A549 (cell line): ENCODE measurements at regions of chr20 and their contacts with region 1.

Region 1: GRCh38 chr20:21719592-21720214 is 14.2 kb downstream of the PAX1 start:
- DNase-seq: peak; percentile 65 to 78
- ATAC-seq: peak in 1 of 2 experiments; percentile 76; a peak in 3 of 6 replicates
- H3K4me3 ChIP-seq: no peak overlapping the region
- H3K27ac ChIP-seq: no peak overlapping the region
- H3K4me1 ChIP-seq: no peaks in the 10 kb centered on the region
- CTCF ChIP-seq: peak; percentile 89
- EP300 ChIP-seq: no peak
- POLR2A ChIP-seq: no peak
- RAD21 ChIP-seq: peak; percentile 41 to 54

Region 2: DNA sequence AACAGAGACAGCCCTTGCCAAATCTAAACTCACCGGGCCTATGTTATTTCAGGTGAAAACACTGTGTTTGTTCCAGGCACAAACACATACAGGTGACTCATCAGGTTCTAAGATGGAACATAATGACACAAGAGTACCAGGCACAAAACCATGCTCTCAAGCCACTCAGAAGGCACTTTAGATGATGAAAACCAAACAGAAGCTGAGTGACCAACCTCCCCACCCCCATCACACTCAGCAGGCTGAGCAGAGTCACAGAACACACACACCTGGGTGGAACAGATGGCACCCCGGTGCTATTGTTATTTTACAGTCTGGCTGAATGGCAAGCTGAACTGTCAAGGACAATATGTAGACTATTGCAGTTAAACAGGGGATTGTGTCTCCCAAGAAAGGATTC is 185.2 kb before region 1 on chr20:
- CTCF ChIA-PET with region 1: no interaction called
- POLR2A ChIA-PET with region 1: no interaction called
- DNase-seq: no peak
- ATAC-seq: no peak
- H3K4me3 ChIP-seq: no peak overlapping the region
- H3K27ac ChIP-seq: no peak overlapping the region
- H3K4me1 ChIP-seq: no peaks in the 10 kb centered on the region
- CTCF ChIP-seq: no peak
- EP300 ChIP-seq: no peak
- POLR2A ChIP-seq: no peak
- RAD21 ChIP-seq: no peak

Region 3: DNA sequence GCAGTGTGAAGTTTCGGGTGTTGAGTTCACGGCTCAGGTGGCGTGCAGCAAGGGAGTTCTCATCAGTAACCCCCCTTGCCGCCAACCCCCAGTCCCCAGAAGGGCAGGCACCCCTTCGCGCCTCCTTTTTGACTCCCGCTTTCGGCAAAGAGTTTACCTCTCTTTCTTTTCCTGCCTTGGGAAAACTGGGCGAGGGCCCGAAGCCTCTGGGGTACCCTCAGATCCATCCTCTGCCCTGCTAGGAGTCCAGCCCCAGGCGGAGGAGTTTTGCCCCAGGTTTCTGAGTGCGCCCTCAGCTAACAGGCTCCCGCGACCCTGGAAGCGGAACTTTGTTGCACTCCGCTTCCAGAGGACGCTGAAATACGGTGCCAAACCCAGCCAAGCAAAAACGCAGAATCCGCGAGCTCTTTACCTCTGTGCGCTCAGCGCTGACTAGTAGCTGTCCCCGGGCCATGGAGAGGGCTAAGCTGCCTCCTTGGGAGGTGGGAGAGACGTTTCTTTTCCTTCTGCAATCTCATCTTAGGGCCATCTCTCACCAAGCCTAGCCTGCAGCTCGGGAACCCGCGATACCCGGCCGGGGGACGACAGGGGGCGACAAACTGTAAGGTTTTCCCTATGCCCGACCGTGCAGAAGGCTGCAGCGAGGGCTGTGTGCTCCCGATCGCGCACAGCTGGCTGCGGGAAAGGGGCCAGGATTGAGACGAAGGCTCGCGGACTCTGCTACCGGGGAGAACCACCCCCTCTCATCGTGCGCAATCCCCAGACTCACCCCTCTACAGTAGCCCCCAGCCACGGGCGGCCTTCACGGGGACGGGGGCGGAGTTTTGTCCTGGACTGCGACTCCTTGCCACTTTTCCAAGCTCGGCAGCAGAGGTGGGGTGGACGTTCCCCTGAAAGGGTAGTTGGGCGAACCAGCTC is 16.9 kb before region 1 on chr20:
- CTCF ChIA-PET with region 1: interaction called, 115 read pairs
- POLR2A ChIA-PET with region 1: no interaction called
- DNase-seq: peak; percentile 65 to 69
- ATAC-seq: peak; percentile 85 to 97
- H3K4me3 ChIP-seq: peak overlapping the region; percentile 44
- H3K27ac ChIP-seq: no peak overlapping the region
- H3K4me1 ChIP-seq: no peaks in the 10 kb centered on the region
- CTCF ChIP-seq: peak; percentile 66
- EP300 ChIP-seq: no peak
- POLR2A ChIP-seq: no peak
- RAD21 ChIP-seq: peak; percentile 55 to 65

Region 4: DNA sequence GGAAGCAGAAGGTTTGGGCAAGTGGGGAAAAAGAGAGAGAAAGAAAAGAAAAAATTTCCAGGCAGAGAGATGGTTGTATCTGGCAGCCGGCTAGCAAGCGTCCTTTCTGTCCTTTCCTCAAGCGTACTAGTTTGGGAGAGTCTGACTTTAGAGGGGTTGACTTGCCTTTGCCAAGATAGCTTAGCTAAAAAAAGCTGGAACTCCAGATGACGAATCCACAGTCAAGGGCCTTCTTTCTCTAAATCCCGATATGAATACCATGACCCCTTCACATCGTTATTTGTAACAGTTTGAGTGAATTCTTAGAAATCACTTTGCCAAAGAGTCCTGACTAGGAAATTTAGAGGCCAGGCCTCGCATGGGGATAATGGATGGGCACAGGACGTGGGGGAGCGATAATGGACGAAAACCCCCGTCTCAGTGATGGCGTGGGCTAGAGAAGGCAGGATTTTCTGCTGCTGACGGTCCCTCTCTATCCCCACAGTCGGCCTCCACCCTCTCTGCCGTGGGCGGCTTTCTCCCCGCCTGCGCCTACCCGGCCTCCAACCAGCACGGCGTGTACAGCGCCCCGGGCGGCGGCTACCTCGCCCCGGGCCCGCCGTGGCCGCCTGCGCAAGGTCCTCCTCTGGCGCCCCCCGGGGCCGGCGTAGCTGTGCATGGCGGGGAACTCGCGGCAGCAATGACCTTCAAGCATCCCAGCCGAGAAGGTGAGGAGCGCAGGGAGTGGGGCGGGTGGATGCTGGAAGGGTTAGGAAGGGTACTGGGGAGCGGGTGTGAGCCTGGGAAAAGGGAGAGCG is 10.8 kb before region 1 on chr20:
- CTCF ChIA-PET with region 1: interaction called, 115 read pairs
- POLR2A ChIA-PET with region 1: no interaction called
- DNase-seq: no peak
- ATAC-seq: no peak
- H3K4me3 ChIP-seq: no peak overlapping the region
- H3K27ac ChIP-seq: no peak overlapping the region
- H3K4me1 ChIP-seq: no peaks in the 10 kb centered on the region
- CTCF ChIP-seq: no peak
- EP300 ChIP-seq: no peak
- POLR2A ChIP-seq: no peak
- RAD21 ChIP-seq: no peak

Region 5: GRCh38 chr20:21767739-21768223 is 48.1 kb after region 1 on chr20:
- CTCF ChIA-PET with region 1: interaction called, 10 read pairs
- POLR2A ChIA-PET with region 1: no interaction called
- DNase-seq: peak; percentile 10 to 36
- ATAC-seq: peak; percentile 70 to 88; a peak in 5 of 6 replicates
- H3K4me3 ChIP-seq: no peak overlapping the region
- H3K27ac ChIP-seq: no peak overlapping the region
- H3K4me1 ChIP-seq: no peaks in the 10 kb centered on the region
- CTCF ChIP-seq: peak; percentile 31
- EP300 ChIP-seq: no peak
- POLR2A ChIP-seq: no peak
- RAD21 ChIP-seq: 0 out of 5 replicates have a peak, but pooled peaks of 1 of the 2 experiments have one; percentile 12

Region 6: DNA sequence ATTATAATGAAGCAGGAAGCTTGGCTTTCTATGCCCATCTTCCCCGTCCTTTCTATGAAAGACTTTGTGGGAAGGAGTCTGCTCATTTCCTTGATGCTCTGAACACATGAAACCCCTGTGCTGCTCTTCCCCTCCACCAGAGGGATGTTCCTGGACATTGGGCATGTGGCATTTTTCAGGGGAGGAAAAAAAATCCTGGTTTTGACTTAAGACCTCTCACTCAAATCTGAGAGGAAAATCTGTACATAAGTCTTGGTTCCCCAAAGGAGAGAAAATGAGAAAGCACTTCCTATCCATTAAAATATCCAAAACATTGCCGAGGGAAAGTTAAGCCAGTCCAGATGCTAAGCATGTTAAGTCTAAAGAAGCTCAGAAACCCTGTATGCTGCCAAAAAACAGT is 378.8 kb after region 1 on chr20:
- CTCF ChIA-PET with region 1: interaction called, 12 read pairs
- POLR2A ChIA-PET with region 1: no interaction called
- DNase-seq: no peak
- ATAC-seq: no peak
- H3K4me3 ChIP-seq: no peak overlapping the region
- H3K27ac ChIP-seq: no peak overlapping the region
- H3K4me1 ChIP-seq: no peaks in the 10 kb centered on the region
- CTCF ChIP-seq: no peak
- EP300 ChIP-seq: no peak
- POLR2A ChIP-seq: no peak
- RAD21 ChIP-seq: no peak

Region 7: GRCh38 chr20:22106308-22106938 is 386.7 kb after region 1 on chr20:
- CTCF ChIA-PET with region 1: interaction called, 18 read pairs
- POLR2A ChIA-PET with region 1: no interaction called
- DNase-seq: peak; percentile 10 to 66
- ATAC-seq: peak; percentile 66 to 77
- H3K4me3 ChIP-seq: no peak overlapping the region
- H3K27ac ChIP-seq: no peak overlapping the region
- H3K4me1 ChIP-seq: no peaks in the 10 kb centered on the region
- CTCF ChIP-seq: peak; percentile 67
- EP300 ChIP-seq: no peak
- POLR2A ChIP-seq: no peak
- RAD21 ChIP-seq: peak; percentile 71 to 72

Region 8: DNA sequence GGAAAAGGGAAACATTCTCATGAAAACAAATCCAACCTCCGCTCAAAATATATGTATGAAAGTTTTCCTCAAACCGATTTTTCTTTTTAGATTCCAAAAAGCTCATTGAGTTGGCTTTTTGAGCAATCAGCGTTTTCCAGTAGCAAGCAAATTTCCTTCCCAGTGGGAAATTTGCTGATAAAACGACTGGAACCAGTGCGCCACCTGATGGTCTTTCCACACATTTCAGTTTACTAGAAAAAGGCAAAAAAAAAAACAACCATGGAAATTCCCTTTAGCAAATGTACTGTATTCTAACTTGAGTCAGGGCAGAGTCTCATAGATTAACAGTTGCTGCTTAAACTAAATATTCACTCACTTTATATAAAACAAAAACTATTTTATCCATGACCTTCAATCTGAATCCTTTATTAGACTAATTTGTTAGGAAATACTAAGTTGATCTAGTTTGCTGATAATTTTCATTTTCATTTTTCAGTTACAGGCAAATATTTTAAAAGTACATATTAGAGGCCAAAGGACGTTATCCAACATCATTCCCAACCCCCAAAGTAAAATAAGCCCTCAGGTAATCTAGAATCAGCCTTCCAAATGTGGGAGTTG is 593.1 kb after region 1 on chr20:
- CTCF ChIA-PET with region 1: interaction called, 18 read pairs
- POLR2A ChIA-PET with region 1: no interaction called
- DNase-seq: peak; percentile 56 to 63
- ATAC-seq: peak in 1 of 2 experiments; percentile 50; a peak in 3 of 6 replicates
- H3K4me3 ChIP-seq: no peak overlapping the region
- H3K27ac ChIP-seq: no peak overlapping the region
- H3K4me1 ChIP-seq: no peaks in the 10 kb centered on the region
- CTCF ChIP-seq: peak; percentile 87
- EP300 ChIP-seq: no peak
- POLR2A ChIP-seq: no peak
- RAD21 ChIP-seq: peak; percentile 73 to 84